Activated CD4-positive, alpha-beta T cell treated with anti-CD3 and anti-CD28 coated beads, Interleukin-2, amount 10 ng/mL, durations not matched to agents 24 days and 14 days (primary cell): ENCODE measurements at regions of chr22 and their contacts with region 1.

Region 1: GRCh38 chr22:19447388-19448075 is at the start of gene C22orf39:
- DNase-seq: peak; percentile 97
- H3K4me3 Mint-ChIP-seq: peak within 1 kb of the TSS; percentile 88
- H3K27ac Mint-ChIP-seq: peak within 1 kb of the TSS; percentile 94
- H3K4me1 Mint-ChIP-seq: peaks cover 35% of the 10 kb centered on the region
- H3K27me3 Mint-ChIP-seq: no peaks in the 10 kb centered on the region
- total RNA-seq, gene C22orf39: 25.7 and 28.5 TPM in 2 replicates

Region 2: DNA sequence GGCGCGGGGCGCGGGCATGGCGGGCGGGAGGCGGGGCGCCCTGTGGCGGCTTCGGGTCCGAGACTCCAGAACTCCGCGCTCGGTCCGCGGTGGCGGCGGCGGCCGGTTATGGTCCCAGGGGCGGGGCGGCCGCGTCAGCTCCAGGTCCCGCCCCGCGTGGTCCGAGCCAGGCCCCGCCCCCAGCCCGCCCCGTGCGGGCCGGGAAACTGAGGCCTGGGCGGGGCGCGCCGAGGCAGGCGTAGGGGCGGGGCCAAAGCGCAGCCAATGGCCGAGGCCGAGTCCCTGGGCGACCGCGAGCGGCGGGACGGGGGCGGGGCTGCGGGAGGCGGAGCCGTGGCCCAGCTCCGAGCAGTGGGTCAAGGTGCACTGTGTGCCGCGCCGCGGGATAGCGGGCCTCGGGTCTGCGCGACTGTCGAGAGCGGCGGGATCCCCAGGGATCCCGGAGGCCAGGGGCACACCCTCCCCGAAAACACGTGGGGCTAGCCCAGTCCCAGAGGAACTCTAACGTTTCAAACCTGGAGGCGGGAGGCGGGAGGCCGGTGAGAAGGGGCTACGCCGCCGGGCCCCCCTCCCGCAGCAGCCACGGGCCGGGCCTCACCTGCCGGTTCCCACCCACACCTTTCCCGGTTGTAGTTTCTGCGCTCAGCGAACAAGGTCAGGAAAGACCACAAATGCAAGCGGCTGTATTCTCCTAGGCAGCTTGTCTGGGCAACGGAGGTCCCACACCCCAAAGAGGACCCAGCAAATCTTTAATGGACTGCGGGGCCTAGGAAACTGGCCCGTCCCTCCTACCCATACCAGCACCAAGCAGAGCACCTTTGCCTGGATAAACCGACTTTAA is 268.7 kb before region 1 on chr22 and contains the start of gene SLC25A1:
- intact Hi-C with region 1: loop called (anchors 1 kb)
- DNase-seq: peak; percentile 97
- H3K4me3 Mint-ChIP-seq: peak within 1 kb of the TSS; percentile 83
- H3K27ac Mint-ChIP-seq: peak within 1 kb of the TSS; percentile 70
- H3K4me1 Mint-ChIP-seq: peaks cover 23% of the 10 kb centered on the region
- H3K27me3 Mint-ChIP-seq: no peaks in the 10 kb centered on the region
- total RNA-seq, gene SLC25A1: 39.4 and 41.2 TPM in 2 replicates

Region 3: DNA sequence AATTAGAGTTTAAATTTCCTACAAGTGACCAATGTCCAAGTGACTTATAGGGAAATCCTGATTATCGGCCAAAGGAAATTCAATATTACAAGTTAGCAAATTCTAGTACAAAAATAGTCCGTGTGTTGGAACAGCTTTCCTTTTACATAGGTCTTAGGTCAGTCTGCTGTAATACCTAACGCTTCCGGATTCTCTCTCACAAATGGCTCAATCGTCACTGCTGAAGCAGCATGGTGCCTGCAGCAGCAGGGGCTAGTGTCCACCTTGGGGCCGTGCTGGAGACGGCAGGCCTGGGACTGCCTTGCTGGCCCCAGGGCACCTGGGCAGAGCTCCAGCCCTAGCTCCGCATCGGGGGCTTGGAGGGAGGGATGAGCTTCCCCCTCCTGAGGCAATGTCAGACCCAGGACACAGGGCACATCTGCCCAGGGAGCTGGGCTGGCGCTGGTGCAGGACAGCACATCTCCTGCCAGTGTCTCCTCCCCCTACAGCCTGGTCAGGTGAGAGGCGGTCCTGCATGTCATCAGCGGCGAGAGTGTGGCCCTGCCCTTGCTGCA is 116.6 kb before region 1 on chr22:
- intact Hi-C with region 1: no loop called
- DNase-seq: no peak
- H3K4me3 Mint-ChIP-seq: no peak overlapping the region
- H3K27ac Mint-ChIP-seq: no peak overlapping the region
- H3K4me1 Mint-ChIP-seq: no peaks in the 10 kb centered on the region
- H3K27me3 Mint-ChIP-seq: no peaks in the 10 kb centered on the region

Region 4: GRCh38 chr22:19368876-19369275 is 78.7 kb before region 1 on chr22:
- intact Hi-C with region 1: no loop called
- DNase-seq: no peak
- H3K4me3 Mint-ChIP-seq: no peak overlapping the region
- H3K27ac Mint-ChIP-seq: no peak overlapping the region
- H3K4me1 Mint-ChIP-seq: no peaks in the 10 kb centered on the region
- H3K27me3 Mint-ChIP-seq: no peaks in the 10 kb centered on the region

Region 5: GRCh38 chr22:19419464-19420178 is 27.9 kb before region 1 on chr22:
- intact Hi-C with region 1: loop called (anchors 1 kb)
- DNase-seq: peak; percentile 84
- H3K4me3 Mint-ChIP-seq: peak overlapping the region; percentile 52
- H3K27ac Mint-ChIP-seq: peak overlapping the region; percentile 83
- H3K4me1 Mint-ChIP-seq: peaks cover 57% of the 10 kb centered on the region
- H3K27me3 Mint-ChIP-seq: no peaks in the 10 kb centered on the region

Region 6: DNA sequence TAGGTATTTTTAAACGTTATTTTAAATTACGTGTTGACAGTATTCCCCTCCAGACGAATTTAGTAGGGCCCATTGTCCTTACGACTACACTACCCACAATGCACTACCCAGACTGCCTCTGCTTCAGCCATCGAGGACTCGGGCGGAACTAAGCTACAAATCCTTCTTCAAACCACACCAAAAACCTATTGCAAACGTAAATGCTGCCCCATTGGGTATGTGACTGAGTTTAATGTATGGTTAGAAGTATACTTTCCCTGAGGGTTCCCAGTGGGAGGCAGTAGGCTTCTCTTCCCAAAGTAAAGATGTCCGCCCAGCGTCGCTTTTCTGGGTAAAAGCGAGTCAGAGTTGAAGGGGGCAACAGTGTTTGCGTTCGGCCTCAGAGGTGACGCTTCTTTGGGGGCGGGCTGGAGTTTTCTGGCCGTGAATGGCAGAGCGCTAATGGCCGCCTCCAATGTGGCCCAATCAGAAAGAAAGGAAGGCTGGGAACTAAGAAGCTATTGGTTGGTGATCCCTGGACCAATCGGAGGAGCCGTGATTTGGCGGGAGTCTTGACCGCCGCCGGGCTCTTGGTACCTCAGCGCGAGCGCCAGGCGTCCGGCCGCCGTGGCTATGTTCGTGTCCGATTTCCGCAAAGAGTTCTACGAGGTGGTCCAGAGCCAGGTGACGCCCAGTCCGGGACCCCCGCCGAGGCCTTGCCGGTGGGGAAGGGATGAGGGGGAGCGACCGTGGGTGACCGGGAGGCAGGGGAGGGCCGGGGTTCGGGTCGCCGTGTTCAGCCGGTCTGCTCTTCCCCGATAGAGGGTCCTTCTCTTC is 32.0 kb after region 1 on chr22 and contains the start of gene CDC45:
- intact Hi-C with region 1: loop called (anchors 1 kb)
- DNase-seq: peak; percentile 98
- H3K4me3 Mint-ChIP-seq: peak within 1 kb of the TSS; percentile 100
- H3K27ac Mint-ChIP-seq: peak within 1 kb of the TSS; percentile 98
- H3K4me1 Mint-ChIP-seq: peaks cover 37% of the 10 kb centered on the region
- H3K27me3 Mint-ChIP-seq: no peaks in the 10 kb centered on the region
- total RNA-seq, gene CDC45: 121 and 123 TPM in 2 replicates

Region 7: GRCh38 chr22:19576460-19577421 is 129.2 kb after region 1 on chr22:
- intact Hi-C with region 1: loop called (anchors 10 kb)
- DNase-seq: peak; percentile 87
- H3K4me3 Mint-ChIP-seq: peak overlapping the region; percentile 70
- H3K27ac Mint-ChIP-seq: peak overlapping the region; percentile 94
- H3K4me1 Mint-ChIP-seq: peaks cover 46% of the 10 kb centered on the region
- H3K27me3 Mint-ChIP-seq: no peaks in the 10 kb centered on the region

Region 8: DNA sequence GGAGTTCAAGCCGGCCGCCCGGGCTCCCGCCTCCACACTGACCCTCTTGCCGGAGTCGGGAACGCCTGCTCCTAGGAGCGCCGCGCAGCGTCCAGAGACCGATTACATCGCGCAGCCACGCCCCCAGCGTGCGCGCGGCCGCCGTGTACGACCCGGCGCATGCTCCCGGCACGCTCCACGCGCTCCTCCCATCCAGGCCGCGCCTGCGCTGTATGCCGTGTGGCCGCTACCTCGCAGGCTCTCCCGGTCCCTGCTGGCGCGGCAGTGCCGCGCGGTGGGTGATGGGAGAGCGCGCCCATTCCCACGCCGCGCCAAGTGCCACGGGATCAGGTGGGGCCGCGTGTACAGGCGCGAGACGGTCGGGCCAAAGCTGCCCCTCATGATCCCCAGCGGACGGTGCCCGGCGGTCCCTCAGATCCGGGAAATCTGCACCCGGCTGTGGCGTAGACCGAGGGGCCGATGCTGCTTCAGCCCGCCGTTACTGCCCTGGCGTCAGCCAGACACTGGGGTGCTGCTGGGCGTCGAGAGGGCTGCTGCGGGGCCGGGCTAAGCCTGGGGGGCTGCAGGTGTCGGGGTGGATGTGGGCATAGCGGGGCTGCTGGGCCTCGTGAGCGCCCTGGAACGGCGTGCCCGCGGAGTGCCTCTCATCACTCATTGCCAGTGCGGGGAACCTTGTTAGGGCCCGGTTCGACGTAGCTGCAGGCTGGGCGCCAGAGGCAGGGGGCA is 407.4 kb after region 1 on chr22 and contains the starts of genes GNB1L and RTL10:
- intact Hi-C with region 1: loop called (anchors 10 kb)
- DNase-seq: peak; percentile 99
- H3K4me3 Mint-ChIP-seq: peak within 1 kb of the TSS; percentile 92
- H3K27ac Mint-ChIP-seq: peak within 1 kb of the TSS; percentile 96
- H3K4me1 Mint-ChIP-seq: peaks cover 24% of the 10 kb centered on the region
- H3K27me3 Mint-ChIP-seq: no peaks in the 10 kb centered on the region
- total RNA-seq, gene GNB1L: 21.1 and 21.4 TPM in 2 replicates
- total RNA-seq, gene RTL10: 20.0 and 23.4 TPM in 2 replicates